Activated naive CD4-positive, alpha-beta T cell treated with anti-CD3 and anti-CD28 coated beads, Interleukin-2, amount 10 ng/mL, durations not matched to agents 7 days and 5 days (primary cell): ENCODE measurements at regions of chr17 and their contacts with region 1.

Region 1: DNA sequence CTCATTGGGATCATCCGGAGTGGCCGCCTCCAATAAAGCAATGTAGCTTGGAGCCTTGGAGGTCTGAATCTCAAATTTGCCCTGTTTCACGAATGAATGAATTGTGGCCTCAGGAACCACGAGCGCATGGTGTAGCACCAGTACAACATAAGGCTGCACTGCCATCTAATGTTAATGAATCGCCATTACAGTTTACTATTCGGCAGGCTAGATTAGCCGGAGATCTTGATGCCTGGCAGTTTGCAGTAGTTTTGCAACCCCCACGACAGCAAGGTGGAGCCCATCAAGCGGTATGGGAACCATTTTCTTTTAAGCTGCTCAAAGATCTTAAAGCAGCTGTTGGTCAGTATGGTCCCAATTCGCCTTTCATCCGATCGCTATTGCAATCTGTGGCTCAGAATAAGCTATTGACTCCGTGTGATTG is 18.8 kb downstream of the ALOX15B start:
- DNase-seq: peak; percentile 52
- H3K4me3 Mint-ChIP-seq: no peak overlapping the region
- H3K27ac Mint-ChIP-seq: no peak overlapping the region
- H3K4me1 Mint-ChIP-seq: peaks cover 15% of the 10 kb centered on the region
- H3K27me3 Mint-ChIP-seq: peaks cover 74% of the 10 kb centered on the region

Region 2: GRCh38 chr17:7732981-7733539 is 324.6 kb before region 1 on chr17:
- CTCF ChIA-PET with region 1: no interaction called
- DNase-seq: no peak
- H3K4me3 Mint-ChIP-seq: no peak overlapping the region
- H3K27ac Mint-ChIP-seq: no peak overlapping the region
- H3K4me1 Mint-ChIP-seq: no peaks in the 10 kb centered on the region
- H3K27me3 Mint-ChIP-seq: peaks cover 32% of the 10 kb centered on the region

Region 3: DNA sequence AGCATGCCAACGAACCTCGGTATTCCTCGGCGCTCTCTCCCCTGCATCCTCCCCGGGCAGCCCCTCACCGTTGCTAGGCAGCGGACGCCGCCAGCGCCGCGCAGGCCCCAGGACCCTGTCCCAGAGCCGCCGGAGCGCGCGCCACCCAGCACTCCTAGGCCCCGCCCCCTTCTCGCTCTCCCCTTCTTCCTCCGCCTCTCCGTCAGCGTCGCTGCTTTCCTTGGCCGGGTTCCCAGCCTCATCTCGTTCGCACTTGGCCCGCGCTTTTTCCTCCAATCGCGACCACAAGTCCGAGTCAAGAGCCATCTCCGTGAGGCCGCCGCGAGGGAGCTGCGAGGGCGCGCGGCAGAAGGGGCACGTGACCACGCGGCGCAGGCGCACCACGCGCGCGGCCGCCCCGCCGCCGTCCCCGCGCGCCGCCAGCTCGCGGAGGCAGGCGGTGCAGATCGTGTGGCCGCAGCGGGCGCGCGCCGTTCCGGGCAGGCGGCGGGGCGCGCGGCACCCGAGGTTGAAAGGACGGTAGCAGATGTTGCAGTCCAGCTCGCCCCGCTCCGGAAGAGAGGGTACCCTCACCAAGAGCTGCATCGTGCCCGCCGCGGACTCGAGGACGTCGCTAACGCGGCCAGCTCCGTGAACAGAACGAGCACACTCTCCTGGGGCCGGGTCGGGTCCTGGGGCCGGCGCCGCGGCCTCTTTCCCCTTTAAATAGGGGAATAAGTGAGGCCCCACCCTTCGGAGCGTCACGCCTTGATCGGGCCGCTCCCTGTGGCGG is 141.9 kb before region 1 on chr17 and contains the start of gene RNF227:
- CTCF ChIA-PET with region 1: interaction called, 11 read pairs
- DNase-seq: peak; percentile 89
- H3K4me3 Mint-ChIP-seq: peak within 1 kb of the TSS; percentile 87
- H3K27ac Mint-ChIP-seq: peak within 1 kb of the TSS; percentile 94
- H3K4me1 Mint-ChIP-seq: peaks cover 43% of the 10 kb centered on the region
- H3K27me3 Mint-ChIP-seq: peaks cover 4% of the 10 kb centered on the region

Region 4: GRCh38 chr17:8016632-8017478 is 40.8 kb before region 1 on chr17:
- CTCF ChIA-PET with region 1: interaction called, 18 read pairs
- DNase-seq: peak; percentile 76
- H3K4me3 Mint-ChIP-seq: peak overlapping the region; percentile 62
- H3K27ac Mint-ChIP-seq: no peak overlapping the region
- H3K4me1 Mint-ChIP-seq: peaks cover 8% of the 10 kb centered on the region
- H3K27me3 Mint-ChIP-seq: peaks cover 97% of the 10 kb centered on the region

Region 5: DNA sequence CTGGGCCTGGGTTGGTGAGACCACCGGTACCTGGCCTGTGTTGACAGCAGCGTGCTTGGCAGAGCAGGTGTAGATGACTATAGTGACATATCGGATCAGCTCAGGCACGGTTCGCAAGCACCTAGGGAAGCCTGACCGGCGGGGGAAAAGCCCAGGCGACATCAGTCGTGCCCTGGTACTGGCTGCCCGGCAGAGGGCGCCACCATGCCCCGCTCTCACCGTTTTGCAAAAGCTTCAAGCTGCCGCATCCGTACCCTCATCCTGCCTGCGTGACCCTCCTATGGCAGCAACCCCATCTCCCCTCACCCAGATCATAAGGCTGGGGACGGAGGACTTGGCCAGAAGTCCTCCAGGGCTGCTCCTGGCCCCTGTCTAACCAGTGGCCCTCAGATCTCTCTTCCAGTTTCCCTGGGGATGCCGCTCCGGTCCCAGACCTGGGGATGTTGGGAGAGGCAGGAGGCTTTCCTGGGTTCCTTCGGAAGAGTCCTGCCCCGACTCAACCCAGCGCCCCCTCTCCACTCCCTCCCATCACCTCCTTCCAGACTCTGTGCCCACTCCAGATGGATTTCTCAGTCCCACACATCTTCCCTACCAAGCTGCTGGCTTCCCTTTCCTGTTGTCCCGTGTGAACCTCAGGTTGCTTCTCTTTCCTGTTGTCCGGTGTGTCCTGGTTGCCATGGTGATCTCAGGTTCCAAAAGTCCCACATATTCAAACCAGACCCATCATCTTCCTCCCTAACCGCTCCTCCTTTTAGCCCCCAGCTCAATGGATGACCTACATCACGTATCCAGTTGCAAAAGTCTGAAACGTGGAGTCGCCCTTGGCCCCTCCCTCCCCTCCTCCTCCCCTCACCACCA is 16.2 kb after region 1 on chr17:
- CTCF ChIA-PET with region 1: interaction called, 134 read pairs
- DNase-seq: peak; percentile 89
- H3K4me3 Mint-ChIP-seq: peak overlapping the region; percentile 65
- H3K27ac Mint-ChIP-seq: peak overlapping the region; percentile 21
- H3K4me1 Mint-ChIP-seq: peaks cover 30% of the 10 kb centered on the region
- H3K27me3 Mint-ChIP-seq: peaks cover 89% of the 10 kb centered on the region

Region 6: DNA sequence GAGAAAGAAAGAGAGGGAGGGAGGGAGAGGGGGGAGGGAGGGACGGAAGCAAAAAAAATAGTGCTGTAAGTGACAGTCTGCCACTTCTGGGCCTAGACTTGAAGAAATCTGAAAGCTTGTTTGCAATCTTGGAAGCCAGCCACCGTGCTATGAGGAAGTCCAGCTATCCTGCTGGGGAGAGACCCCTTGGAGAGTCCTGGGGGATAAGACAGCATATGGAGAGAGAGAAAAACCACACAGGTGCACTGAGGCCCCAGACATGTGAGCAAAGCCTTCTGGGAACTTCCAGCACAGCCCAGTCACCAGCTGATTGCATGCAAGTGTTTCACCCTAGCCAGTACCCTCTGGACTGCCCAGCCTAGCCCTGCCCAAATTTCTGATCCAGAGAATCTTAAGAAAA is 42.4 kb after region 1 on chr17:
- CTCF ChIA-PET with region 1: interaction called, 113 read pairs
- DNase-seq: no peak
- H3K4me3 Mint-ChIP-seq: no peak overlapping the region
- H3K27ac Mint-ChIP-seq: no peak overlapping the region
- H3K4me1 Mint-ChIP-seq: peaks cover 5% of the 10 kb centered on the region
- H3K27me3 Mint-ChIP-seq: peaks cover 48% of the 10 kb centered on the region

Region 7: DNA sequence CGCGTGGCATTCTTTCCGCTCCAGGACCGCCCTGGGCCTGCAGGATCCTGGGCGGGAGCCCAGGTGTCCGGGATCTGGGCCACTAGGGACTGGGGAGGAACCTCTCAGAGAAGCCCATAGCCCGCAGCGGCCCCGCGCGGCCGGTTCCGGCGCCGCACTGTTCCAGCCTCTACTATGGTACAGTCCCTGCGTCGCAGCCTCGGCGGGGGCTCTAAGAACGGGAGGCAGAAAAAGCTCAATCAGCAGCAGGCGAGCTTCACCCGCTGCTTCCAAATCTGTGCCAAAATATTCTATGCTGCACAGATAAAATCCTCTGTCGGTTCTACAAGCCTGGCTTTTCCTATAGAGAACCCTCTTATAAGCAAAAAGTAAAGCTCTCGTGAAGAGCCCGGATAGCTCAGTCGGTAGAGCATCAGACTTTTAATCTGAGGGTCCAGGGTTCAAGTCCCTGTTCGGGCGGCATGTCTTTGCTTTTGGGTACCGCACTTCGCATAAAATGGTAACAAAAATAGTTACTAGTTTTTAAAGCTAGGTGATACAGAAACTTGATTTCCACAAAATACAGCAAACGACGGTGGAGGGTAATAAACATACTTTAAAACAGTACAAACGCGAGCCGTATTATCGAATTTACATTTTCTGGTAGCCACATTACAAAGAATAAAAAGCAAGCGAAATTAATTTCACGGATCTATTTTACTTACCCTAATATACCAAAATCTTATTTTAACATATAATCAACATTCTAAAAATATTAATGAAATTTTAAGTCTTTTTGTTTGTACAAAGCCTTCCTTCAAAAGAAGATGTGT is 61.3 kb after region 1 on chr17:
- CTCF ChIA-PET with region 1: interaction called, 17 read pairs
- DNase-seq: peak; percentile 89
- H3K4me3 Mint-ChIP-seq: peak overlapping the region; percentile 86
- H3K27ac Mint-ChIP-seq: peak overlapping the region; percentile 94
- H3K4me1 Mint-ChIP-seq: peaks cover 59% of the 10 kb centered on the region
- H3K27me3 Mint-ChIP-seq: peaks cover 91% of the 10 kb centered on the region

Region 8: GRCh38 chr17:8176197-8176940 is 118.7 kb after region 1 on chr17 and contains the start of gene TMEM107:
- CTCF ChIA-PET with region 1: no interaction called
- DNase-seq: peak; percentile 94
- H3K4me3 Mint-ChIP-seq: peak within 1 kb of the TSS; percentile 91
- H3K27ac Mint-ChIP-seq: peak within 1 kb of the TSS; percentile 90
- H3K4me1 Mint-ChIP-seq: peaks cover 56% of the 10 kb centered on the region
- H3K27me3 Mint-ChIP-seq: peaks cover 12% of the 10 kb centered on the region